ENCODE measurements at regions of chr7 and their contacts with region 1.

Region 1: GRCh38 chr7:24757353-24758275 is at the start of gene GSDME:
- DNase-seq: peak; percentile 24
- H3K4me3 Mint-ChIP-seq: peak within 1 kb of the TSS; percentile 87
- H3K27ac Mint-ChIP-seq: peak within 1 kb of the TSS; percentile 80
- H3K4me1 Mint-ChIP-seq: peaks cover 33% of the 10 kb centered on the region
- H3K27me3 Mint-ChIP-seq: peaks cover 52% of the 10 kb centered on the region
- total RNA-seq, gene GSDME: 8.7 and 9.6 TPM in 2 replicates

Region 2: DNA sequence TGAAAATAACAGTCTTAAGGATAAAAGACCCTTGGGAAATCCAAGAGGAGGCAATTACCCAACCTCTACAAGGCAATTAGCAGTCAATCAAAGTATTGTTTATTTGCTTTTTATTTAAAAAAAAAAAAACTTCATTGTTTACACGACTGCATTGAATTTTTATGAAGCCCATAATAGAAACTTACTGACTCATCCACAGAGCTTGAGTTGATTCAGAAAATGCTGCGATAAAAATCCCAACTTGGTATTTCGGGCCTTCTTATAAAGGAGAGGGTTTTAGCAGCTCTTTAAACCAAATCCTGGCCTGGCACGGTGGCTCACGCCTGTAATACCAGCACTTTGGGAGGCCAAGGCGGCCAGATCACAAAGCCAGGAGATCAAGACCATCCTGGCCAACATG is 253.6 kb before region 1 on chr7:
- intact Hi-C with region 1: no loop called
- DNase-seq: no peak
- H3K4me3 Mint-ChIP-seq: no peak overlapping the region
- H3K27ac Mint-ChIP-seq: no peak overlapping the region
- H3K4me1 Mint-ChIP-seq: no peaks in the 10 kb centered on the region
- H3K27me3 Mint-ChIP-seq: peaks cover 17% of the 10 kb centered on the region

Region 3: DNA sequence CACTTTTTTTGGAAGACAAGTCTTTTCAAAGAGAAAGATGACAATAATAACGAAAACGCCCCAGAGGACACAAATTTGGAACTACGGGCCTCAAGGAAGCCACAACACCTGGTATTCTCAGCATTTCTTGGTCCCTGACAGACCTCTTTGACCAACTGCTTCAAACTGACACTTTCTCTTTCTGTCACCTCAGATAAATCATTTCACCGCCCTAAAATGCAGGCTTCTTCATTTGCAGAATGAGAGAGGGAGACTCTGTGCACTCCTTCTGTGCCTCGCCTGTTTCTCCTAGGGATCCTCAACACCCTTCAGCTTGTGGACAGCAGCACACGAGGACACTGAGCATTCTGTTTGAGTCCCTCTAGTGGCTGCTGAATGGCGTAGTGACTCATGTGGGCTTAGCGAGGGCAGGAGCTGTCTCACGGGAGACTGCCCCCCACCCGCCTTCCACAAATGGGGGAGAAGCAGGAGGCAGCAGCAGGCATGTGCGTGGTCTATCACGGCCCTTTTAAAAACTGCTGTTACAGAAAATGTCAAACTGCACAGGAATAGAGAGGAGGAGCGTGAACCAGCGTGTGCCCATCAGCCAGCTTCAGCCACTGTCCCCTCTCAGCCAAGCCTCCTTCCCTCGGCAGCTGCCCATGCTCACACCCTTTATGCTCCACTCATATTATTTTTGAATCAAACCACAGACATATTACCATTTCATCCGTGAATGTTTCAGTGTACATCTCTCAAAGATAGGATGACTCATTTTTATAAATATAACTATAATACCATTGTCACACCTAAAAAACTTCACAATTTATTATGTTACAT is 41.7 kb before region 1 on chr7:
- intact Hi-C with region 1: loop called (anchors 5 kb)
- DNase-seq: no peak
- H3K4me3 Mint-ChIP-seq: no peak overlapping the region
- H3K27ac Mint-ChIP-seq: no peak overlapping the region
- H3K4me1 Mint-ChIP-seq: peaks cover 20% of the 10 kb centered on the region
- H3K27me3 Mint-ChIP-seq: no peaks in the 10 kb centered on the region

Region 4: DNA sequence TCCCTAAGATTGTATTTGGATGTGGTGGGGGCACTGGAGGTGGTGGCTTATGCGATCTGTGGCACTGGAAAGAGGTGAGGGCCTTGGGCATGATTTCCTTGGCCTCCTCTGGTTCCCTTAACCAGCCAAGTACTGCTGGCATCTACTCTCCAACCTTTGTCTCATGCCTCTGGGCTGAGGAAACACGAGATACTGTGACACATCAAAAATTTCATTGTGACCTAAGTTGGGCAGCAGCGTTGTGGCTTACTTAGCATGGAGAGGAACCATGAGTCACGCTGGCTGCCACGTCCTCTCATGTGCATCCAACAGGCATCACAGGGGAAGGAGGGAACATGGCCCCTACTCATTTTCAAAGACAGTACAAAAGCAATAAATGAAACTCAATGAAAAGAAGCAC is 29.3 kb after region 1 on chr7:
- intact Hi-C with region 1: loop called (anchors 2 kb)
- DNase-seq: no peak
- H3K4me3 Mint-ChIP-seq: no peak overlapping the region
- H3K27ac Mint-ChIP-seq: no peak overlapping the region
- H3K4me1 Mint-ChIP-seq: peaks cover 10% of the 10 kb centered on the region
- H3K27me3 Mint-ChIP-seq: no peaks in the 10 kb centered on the region

Region 5: GRCh38 chr7:25028370-25029021 is 270.9 kb after region 1 on chr7:
- intact Hi-C with region 1: loop called (anchors 5 kb)
- DNase-seq: peak; percentile 32
- H3K4me3 Mint-ChIP-seq: peak overlapping the region; percentile 32
- H3K27ac Mint-ChIP-seq: peak overlapping the region; percentile 82
- H3K4me1 Mint-ChIP-seq: peaks cover 51% of the 10 kb centered on the region
- H3K27me3 Mint-ChIP-seq: peaks cover 17% of the 10 kb centered on the region